Kidney (tissue), 22 donors: ENCODE measurements at regions of chr18 and their contacts with region 1.

Region 1: DNA sequence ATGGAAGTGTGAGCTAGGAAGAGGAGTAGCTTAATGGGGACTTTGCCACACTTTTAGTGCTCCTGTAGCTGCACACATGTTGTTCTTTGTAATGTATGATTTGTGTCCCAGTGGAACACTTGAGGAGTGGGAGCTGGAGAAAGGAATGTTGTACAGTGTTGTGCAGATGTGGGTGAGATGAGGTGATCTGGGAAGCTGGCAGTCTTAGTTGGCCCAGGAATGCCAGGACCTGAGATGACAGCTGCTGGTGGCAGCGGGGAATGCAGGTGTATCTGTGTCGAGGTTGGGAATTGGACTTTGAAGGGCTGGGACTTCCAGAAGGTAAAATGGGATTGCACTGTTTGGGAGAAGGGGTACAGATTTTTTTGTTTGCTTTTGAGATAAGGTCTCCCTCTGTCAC is 23.6 kb downstream of the NEDD4L start:
- DNase-seq: peak in 3 of 5 donors; percentile 45 to 80 (median 60)
- H3K4me3 ChIP-seq: no peak overlapping the region
- H3K27ac ChIP-seq: no peak overlapping the region
- H3K4me1 ChIP-seq: peaks cover 0 to 9% (median 0%) of the 10 kb centered on the region in 3 donors
- H3K27me3 ChIP-seq: no peaks in the 10 kb centered on the region
- CTCF ChIP-seq: no peak

Region 2: GRCh38 chr18:58325494-58325893 is 257.9 kb after region 1 on chr18:
- intact Hi-C with region 1: loop called (anchors 5 kb)
- DNase-seq: no peak
- H3K4me3 ChIP-seq: no peak overlapping the region
- H3K27ac ChIP-seq: no peak overlapping the region
- H3K4me1 ChIP-seq: peaks cover 0 to 4% (median 0%) of the 10 kb centered on the region in 3 donors
- H3K27me3 ChIP-seq: no peaks in the 10 kb centered on the region
- CTCF ChIP-seq: no peak